CD4-positive, alpha-beta memory T cell (primary cell): ENCODE measurements at regions of chr4 and their contacts with region 1.

Region 1: DNA sequence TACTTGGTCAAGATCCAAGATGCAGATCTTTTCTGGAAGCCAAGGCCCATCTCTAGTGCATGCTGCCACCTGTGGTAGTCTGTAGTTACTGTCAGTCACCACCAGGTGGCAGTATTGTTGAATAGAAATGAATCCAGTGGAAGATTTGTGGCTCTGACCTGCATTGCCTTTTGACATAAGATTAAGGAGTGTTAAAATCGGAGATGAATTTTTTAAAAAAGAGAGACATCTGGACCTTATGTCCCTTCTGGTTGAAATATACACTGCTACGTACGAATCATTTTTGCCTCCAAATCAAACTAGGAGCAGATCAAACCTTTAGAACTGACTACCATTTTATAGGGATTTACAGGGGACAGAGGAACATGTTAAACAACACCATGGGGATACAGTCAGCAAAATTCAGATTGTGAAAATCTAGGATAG is 46.9 kb upstream of the RHOH start:
- DNase-seq: peak; percentile 75 to 81 (median 77)
- H3K4me3 ChIP-seq: no peak overlapping the region
- H3K4me3 Mint-ChIP-seq: peak overlapping the region in 2 of 8 donors; percentile 44 to 65
- H3K27ac ChIP-seq: no peak overlapping the region
- H3K27ac Mint-ChIP-seq: peak overlapping the region; percentile 27 to 91 (median 77)
- H3K4me1 ChIP-seq: peaks cover 22% of the 10 kb centered on the region
- H3K4me1 Mint-ChIP-seq: peaks cover 20 to 34% (median 25%) of the 10 kb centered on the region in 4 donors
- H3K27me3 ChIP-seq: no peaks in the 10 kb centered on the region
- H3K27me3 Mint-ChIP-seq: no peaks in the 10 kb centered on the region

Region 2: DNA sequence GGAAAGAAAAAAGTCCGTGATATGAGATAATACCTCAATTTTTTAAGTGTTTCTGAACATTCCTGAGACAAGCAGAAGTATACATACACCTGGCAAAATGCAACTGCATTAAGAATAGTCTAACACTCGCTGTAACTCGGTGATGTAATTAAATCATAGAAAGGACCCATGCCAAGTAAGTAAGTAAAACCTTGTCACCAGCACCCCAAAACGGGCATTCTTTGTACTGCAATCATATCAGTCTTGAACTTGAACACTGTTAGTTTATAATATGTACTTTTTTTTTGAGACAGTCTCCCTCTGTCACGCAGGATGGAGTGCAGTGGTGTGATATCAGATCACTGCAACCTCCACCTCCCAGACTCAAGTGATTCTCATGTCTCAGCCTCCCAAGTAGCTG is 558.7 kb before region 1 on chr4:
- CTCF ChIA-PET with region 1: no interaction called
- POLR2A ChIA-PET with region 1: no interaction called
- intact Hi-C with region 1: no loop called
- DNase-seq: no peak
- H3K4me3 ChIP-seq: no peak overlapping the region
- H3K4me3 Mint-ChIP-seq: no peak overlapping the region
- H3K27ac ChIP-seq: no peak overlapping the region
- H3K27ac Mint-ChIP-seq: no peak overlapping the region
- H3K4me1 ChIP-seq: no peaks in the 10 kb centered on the region
- H3K4me1 Mint-ChIP-seq: no peaks in the 10 kb centered on the region
- H3K27me3 ChIP-seq: no peaks in the 10 kb centered on the region
- H3K27me3 Mint-ChIP-seq: no peaks in the 10 kb centered on the region

Region 3: DNA sequence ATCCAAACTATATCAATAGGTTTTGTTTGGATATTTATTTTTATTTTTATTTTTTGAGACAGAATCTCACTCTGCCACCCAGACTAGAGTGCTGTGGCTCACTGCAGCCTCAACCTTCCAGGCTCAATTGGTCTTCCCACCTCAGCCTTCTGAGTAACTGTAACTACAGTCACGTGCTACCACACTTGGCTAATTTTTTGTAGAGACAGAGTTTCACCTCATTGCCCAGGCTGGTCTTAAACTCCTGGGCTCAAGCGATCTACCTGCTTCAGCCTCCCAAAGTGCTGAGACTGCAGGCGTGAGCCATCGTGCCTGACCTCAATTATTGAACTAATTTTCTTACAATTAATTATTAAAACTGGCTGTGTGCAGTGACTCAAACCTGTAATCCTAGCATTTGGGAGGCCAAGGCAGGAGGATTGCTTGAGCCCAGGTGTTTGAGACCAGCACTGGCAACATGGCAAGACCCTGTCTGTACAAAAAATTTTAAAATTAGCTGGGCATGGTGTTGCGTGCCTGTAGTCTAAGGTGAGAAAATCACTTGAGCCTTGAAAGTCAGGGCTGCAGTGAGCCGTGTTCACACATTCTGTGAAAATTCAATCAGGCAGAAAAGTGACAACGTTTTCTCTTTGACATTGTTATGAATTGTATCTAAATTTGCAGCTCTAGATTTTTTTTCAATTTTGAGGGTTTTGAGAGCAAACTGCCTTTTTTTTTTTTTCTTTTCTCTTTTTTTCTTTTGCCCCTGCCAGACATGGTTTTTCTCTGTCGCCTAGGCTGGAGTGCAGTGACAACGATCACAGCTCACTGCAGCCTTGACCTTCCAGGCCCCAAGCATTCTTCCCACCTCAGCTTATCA is 386.0 kb before region 1 on chr4:
- CTCF ChIA-PET with region 1: no interaction called
- POLR2A ChIA-PET with region 1: no interaction called
- intact Hi-C with region 1: no loop called
- DNase-seq: no peak
- H3K4me3 ChIP-seq: no peak overlapping the region
- H3K4me3 Mint-ChIP-seq: no peak overlapping the region
- H3K27ac ChIP-seq: no peak overlapping the region
- H3K27ac Mint-ChIP-seq: peak overlapping the region in 2 of 7 donors; percentile 17 to 61
- H3K4me1 ChIP-seq: no peaks in the 10 kb centered on the region
- H3K4me1 Mint-ChIP-seq: peaks cover 0 to 2% (median 0%) of the 10 kb centered on the region in 4 donors
- H3K27me3 ChIP-seq: no peaks in the 10 kb centered on the region
- H3K27me3 Mint-ChIP-seq: no peaks in the 10 kb centered on the region

Region 4: DNA sequence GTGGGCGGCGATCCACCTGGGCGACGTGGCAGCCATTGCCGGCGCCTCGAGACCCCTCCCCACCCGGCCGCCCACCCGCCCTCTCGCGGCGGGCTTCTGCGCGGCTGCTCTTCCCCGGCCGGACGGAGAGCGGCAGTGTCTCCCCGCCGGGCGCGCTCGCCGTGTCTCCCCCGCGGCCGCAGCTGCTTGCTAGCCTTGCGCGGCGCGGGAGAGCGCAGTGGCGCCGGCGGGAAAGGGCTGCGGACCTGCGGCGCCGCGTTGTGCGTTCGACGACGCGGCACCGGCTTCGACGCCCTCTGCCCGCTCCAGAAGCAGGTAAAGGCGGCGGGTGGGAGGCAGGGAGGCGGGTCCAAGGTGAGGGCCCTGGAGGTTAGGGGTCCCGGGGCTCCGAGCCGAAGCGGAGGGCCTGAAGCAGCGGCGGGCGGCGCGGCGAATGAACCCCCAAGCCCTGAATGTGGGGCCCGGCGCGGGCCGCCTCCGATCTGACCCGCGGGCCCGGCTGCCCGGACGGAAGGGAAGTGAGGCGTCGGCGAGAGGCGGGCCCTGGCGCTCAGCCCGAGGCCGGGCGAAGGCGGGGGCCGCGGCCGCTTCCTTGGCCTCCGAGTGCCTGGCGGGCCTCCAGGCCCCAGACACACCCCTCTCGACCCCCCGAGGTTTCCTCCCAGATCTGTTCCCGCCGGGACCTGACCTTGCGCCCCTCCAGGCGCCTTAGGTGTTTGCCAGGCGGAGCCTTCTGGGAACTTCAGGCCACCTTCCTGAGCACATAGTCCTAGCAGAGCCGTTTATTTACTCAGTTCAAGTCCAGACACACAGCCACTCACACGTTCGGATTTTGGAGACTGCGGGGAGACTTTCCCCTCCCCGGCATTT is 93.0 kb before region 1 on chr4 and contains the start of gene N4BP2:
- CTCF ChIA-PET with region 1: interaction called, 5 read pairs
- POLR2A ChIA-PET with region 1: interaction called, 5 read pairs
- intact Hi-C with region 1: loop called (anchors 1 kb)
- DNase-seq: peak; percentile 60 to 78 (median 75)
- H3K4me3 ChIP-seq: peak within 1 kb of the TSS; percentile 82 to 100
- H3K4me3 Mint-ChIP-seq: peak within 1 kb of the TSS; percentile 93 to 99 (median 97)
- H3K27ac ChIP-seq: peak within 1 kb of the TSS; percentile 75
- H3K27ac Mint-ChIP-seq: peak within 1 kb of the TSS; percentile 93 to 99 (median 97)
- H3K4me1 ChIP-seq: peaks cover 36% of the 10 kb centered on the region
- H3K4me1 Mint-ChIP-seq: peaks cover 18 to 48% (median 32%) of the 10 kb centered on the region in 4 donors
- H3K27me3 ChIP-seq: no peaks in the 10 kb centered on the region
- H3K27me3 Mint-ChIP-seq: no peaks in the 10 kb centered on the region
- total RNA-seq, gene N4BP2: 15.0 to 16.7 TPM

Region 5: DNA sequence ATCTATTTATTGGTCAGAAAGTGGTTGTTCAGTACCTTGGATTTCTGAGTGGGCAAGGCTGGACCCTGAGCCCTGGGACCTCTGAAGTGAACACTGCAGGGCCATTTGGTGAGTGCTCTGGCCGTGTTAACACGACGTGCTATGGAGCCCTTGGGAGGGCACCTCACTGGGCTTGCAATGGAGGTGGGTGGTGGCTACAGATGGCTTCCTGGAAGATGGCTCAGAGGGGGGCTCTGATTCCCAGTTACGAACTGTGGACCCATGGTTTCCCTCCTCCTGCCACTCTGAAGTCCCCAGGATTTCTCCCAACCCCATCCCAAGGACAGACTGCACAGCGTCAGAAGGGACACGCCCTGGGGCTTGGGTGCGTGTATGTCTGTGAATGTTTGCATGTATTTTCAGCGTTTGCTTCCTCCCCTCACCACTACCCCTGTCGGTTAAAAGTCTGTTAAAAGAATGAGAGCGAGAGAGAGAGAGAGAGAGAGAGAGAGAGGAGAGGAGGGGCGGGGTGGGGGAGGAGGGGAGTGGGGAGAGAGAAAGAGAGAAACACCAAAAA is 43.1 kb after region 1 on chr4:
- CTCF ChIA-PET with region 1: interaction called, 11 read pairs
- POLR2A ChIA-PET with region 1: interaction called, 27 read pairs
- intact Hi-C with region 1: loop called (anchors 1 kb)
- DNase-seq: peak in 4 of 5 donors; percentile 53 to 62 (median 57)
- H3K4me3 ChIP-seq: peak overlapping the region; percentile 12 to 42
- H3K4me3 Mint-ChIP-seq: peak overlapping the region; percentile 78 to 96 (median 88)
- H3K27ac ChIP-seq: peak overlapping the region; percentile 99
- H3K27ac Mint-ChIP-seq: peak overlapping the region; percentile 96 to 100 (median 100)
- H3K4me1 ChIP-seq: peaks cover 52% of the 10 kb centered on the region
- H3K4me1 Mint-ChIP-seq: peaks cover 40 to 84% (median 56%) of the 10 kb centered on the region in 4 donors
- H3K27me3 ChIP-seq: no peaks in the 10 kb centered on the region
- H3K27me3 Mint-ChIP-seq: no peaks in the 10 kb centered on the region

Region 6: GRCh38 chr4:40205259-40206198 is 55.6 kb after region 1 on chr4:
- CTCF ChIA-PET with region 1: interaction called, 9 read pairs
- POLR2A ChIA-PET with region 1: interaction called, 16 read pairs
- intact Hi-C with region 1: no loop called
- DNase-seq: peak in 4 of 5 donors; percentile 44 to 68 (median 49)
- H3K4me3 ChIP-seq: peak overlapping the region; percentile 39 to 67
- H3K4me3 Mint-ChIP-seq: peak overlapping the region; percentile 86 to 100 (median 96)
- H3K27ac ChIP-seq: peak overlapping the region; percentile 99
- H3K27ac Mint-ChIP-seq: peak overlapping the region; percentile 92 to 100 (median 96)
- H3K4me1 ChIP-seq: peaks cover 75% of the 10 kb centered on the region
- H3K4me1 Mint-ChIP-seq: peaks cover 48 to 87% (median 61%) of the 10 kb centered on the region in 4 donors
- H3K27me3 ChIP-seq: no peaks in the 10 kb centered on the region
- H3K27me3 Mint-ChIP-seq: no peaks in the 10 kb centered on the region

Region 7: DNA sequence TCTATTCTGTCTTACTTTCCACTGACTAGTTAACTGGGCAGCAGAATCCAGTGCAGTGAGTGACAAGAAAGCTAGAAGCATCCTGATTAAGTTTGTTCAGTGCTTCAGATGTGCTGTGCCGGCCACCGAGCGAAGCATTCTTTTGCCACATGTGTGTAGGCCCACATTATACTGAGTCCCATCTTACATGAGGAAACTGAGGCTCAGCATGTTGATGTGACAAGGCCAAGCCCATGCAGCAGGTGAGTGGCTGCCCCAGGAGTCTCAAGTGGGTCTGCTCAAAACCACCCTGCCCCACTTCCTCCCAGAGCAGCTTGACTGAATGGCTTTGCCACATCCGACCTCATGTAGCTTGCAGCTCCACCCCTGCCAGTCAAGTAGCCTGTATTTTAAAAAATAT is 97.4 kb after region 1 on chr4:
- CTCF ChIA-PET with region 1: interaction called, 9 read pairs
- POLR2A ChIA-PET with region 1: interaction called, 8 read pairs
- intact Hi-C with region 1: loop called (anchors 2 kb)
- DNase-seq: peak; percentile 66 to 82 (median 69)
- H3K4me3 ChIP-seq: no peak overlapping the region
- H3K4me3 Mint-ChIP-seq: peak overlapping the region in 7 of 8 donors; percentile 19 to 75 (median 58)
- H3K27ac ChIP-seq: peak overlapping the region; percentile 68
- H3K27ac Mint-ChIP-seq: peak overlapping the region; percentile 80 to 100 (median 96)
- H3K4me1 ChIP-seq: peaks cover 88% of the 10 kb centered on the region
- H3K4me1 Mint-ChIP-seq: peaks cover 65 to 92% (median 74%) of the 10 kb centered on the region in 4 donors
- H3K27me3 ChIP-seq: no peaks in the 10 kb centered on the region
- H3K27me3 Mint-ChIP-seq: no peaks in the 10 kb centered on the region

Region 8: DNA sequence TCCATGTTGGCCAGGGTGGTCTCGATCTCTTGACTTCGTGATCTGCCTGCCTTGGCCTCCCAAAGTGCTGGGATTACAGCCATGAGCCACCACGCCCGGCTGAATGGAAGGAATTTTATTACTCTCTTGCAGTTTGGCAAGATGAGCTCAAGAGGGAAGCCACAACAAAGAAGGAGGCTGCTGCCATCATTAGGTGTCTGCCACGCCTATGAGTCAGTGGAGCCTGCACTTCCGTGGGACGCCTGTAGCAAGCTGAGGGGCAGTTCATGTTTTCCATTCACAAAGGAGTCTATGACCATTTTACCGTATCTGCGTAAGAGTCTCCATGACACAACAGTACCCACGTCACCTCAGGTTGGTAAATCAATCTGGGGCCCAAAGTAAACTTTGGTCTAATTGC is 134.0 kb after region 1 on chr4:
- CTCF ChIA-PET with region 1: interaction called, 13 read pairs
- POLR2A ChIA-PET with region 1: no interaction called
- intact Hi-C with region 1: no loop called
- DNase-seq: peak; percentile 71 to 97 (median 86)
- H3K4me3 ChIP-seq: no peak overlapping the region
- H3K4me3 Mint-ChIP-seq: peak overlapping the region in 7 of 8 donors; percentile 70 to 86 (median 79)
- H3K27ac ChIP-seq: peak overlapping the region; percentile 49
- H3K27ac Mint-ChIP-seq: peak overlapping the region; percentile 92 to 98 (median 96)
- H3K4me1 ChIP-seq: peaks cover 39% of the 10 kb centered on the region
- H3K4me1 Mint-ChIP-seq: peaks cover 34 to 73% (median 55%) of the 10 kb centered on the region in 4 donors
- H3K27me3 ChIP-seq: no peaks in the 10 kb centered on the region
- H3K27me3 Mint-ChIP-seq: peaks cover 0 to 2% of the 10 kb centered on the region in 2 donors

Region 9: DNA sequence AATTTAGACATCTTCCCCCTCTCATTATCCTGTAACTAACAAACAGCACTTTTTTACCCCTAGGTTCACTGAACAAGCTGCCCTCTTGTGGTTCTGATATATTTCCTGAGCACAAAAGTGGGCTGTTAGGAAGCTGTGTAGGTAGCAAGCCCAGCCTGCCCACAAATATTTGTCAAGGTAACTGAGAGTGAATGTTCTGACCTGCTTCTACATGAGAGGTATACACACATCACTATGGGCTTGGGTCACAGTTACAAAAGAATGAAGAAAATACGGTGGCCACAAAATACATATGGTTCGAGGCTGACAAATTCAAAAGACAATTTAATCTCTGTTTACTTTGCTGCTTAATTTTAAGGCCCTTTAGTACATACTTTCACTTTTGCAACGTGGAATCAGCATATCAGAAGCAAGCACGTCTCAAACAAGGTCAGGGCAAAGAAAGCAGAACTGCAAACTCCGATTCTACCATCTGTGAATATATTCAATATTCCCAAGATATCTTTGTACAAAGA is 401.0 kb after region 1 on chr4:
- CTCF ChIA-PET with region 1: interaction called, 3 read pairs
- POLR2A ChIA-PET with region 1: no interaction called
- intact Hi-C with region 1: loop called (anchors 2 kb)
- DNase-seq: peak in 4 of 5 donors; percentile 31 to 57 (median 50)
- H3K4me3 ChIP-seq: peak overlapping the region; percentile 8 to 12
- H3K4me3 Mint-ChIP-seq: peak overlapping the region; percentile 68 to 87 (median 82)
- H3K27ac ChIP-seq: peak overlapping the region; percentile 32
- H3K27ac Mint-ChIP-seq: peak overlapping the region; percentile 67 to 97 (median 87)
- H3K4me1 ChIP-seq: no peaks in the 10 kb centered on the region
- H3K4me1 Mint-ChIP-seq: peaks cover 7 to 26% (median 10%) of the 10 kb centered on the region in 4 donors
- H3K27me3 ChIP-seq: no peaks in the 10 kb centered on the region
- H3K27me3 Mint-ChIP-seq: no peaks in the 10 kb centered on the region